OCI-LY7 (cell line): ENCODE measurements at regions of chr1 and their contacts with region 1.

Region 1: GRCh38 chr1:2586154-2587070 is at the start of gene PRXL2B:
- DNase-seq: peak; percentile 94
- H3K4me3 ChIP-seq: peak within 1 kb of the TSS; percentile 90
- H3K27ac ChIP-seq: peak within 1 kb of the TSS; percentile 89
- H3K4me1 ChIP-seq: peaks cover 33% of the 10 kb centered on the region
- CTCF ChIP-seq: no peak
- total RNA-seq, gene PRXL2B: 7.0 and 10.4 TPM in 2 replicates

Region 2: GRCh38 chr1:2514863-2515762 is 71.3 kb before region 1 on chr1:
- CTCF ChIA-PET with region 1: no interaction called
- POLR2A ChIA-PET with region 1: no interaction called
- intact Hi-C with region 1: no loop called
- DNase-seq: no peak
- H3K4me3 ChIP-seq: no peak overlapping the region
- H3K27ac ChIP-seq: no peak overlapping the region
- H3K4me1 ChIP-seq: no peaks in the 10 kb centered on the region
- CTCF ChIP-seq: no peak

Region 3: DNA sequence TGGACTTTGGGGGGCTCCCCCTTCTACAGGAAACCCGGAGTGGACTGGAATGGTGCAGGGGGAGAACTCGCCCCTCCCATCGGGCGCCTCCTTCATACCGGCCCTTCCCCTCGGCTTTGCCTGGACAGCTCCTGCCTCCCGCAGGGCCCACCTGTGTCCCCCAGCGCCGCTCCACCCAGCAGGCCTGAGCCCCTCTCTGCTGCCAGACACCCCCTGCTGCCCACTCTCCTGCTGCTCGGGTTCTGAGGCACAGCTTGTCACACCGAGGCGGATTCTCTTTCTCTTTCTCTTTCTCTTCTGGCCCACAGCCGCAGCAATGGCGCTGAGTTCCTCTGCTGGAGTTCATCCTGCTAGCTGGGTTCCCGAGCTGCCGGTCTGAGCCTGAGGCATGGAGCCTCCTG is 30.1 kb before region 1 on chr1 and contains the start of gene TNFRSF14:
- CTCF ChIA-PET with region 1: no interaction called
- POLR2A ChIA-PET with region 1: interaction called, 4 read pairs
- intact Hi-C with region 1: loop called (anchors 1 kb)
- DNase-seq: peak; percentile 70
- H3K4me3 ChIP-seq: peak within 1 kb of the TSS; percentile 65
- H3K27ac ChIP-seq: peak within 1 kb of the TSS; percentile 41
- H3K4me1 ChIP-seq: peaks cover 20% of the 10 kb centered on the region
- CTCF ChIP-seq: no peak
- total RNA-seq, gene TNFRSF14: 15.0 and 18.5 TPM in 2 replicates

Region 4: GRCh38 chr1:3078430-3078861 is 492.0 kb after region 1 on chr1:
- CTCF ChIA-PET with region 1: no interaction called
- POLR2A ChIA-PET with region 1: no interaction called
- intact Hi-C with region 1: no loop called
- DNase-seq: no peak
- H3K4me3 ChIP-seq: no peak overlapping the region
- H3K27ac ChIP-seq: no peak overlapping the region
- H3K4me1 ChIP-seq: no peaks in the 10 kb centered on the region
- CTCF ChIP-seq: no peak

Region 5: GRCh38 chr1:3126756-3127597 is 540.6 kb after region 1 on chr1:
- CTCF ChIA-PET with region 1: no interaction called
- POLR2A ChIA-PET with region 1: no interaction called
- intact Hi-C with region 1: no loop called
- DNase-seq: no peak
- H3K4me3 ChIP-seq: no peak overlapping the region
- H3K27ac ChIP-seq: no peak overlapping the region
- H3K4me1 ChIP-seq: no peaks in the 10 kb centered on the region
- CTCF ChIP-seq: no peak